Left ventricle myocardium superior (tissue), 1 donor: ENCODE measurements at regions of chr14 and their contacts with region 1.

Region 1: GRCh38 chr14:20613094-20614037 is 22.2 kb upstream of the RNASE12 start:
- DNase-seq: peak; percentile 80
- ATAC-seq: peak; percentile 82

Region 2: DNA sequence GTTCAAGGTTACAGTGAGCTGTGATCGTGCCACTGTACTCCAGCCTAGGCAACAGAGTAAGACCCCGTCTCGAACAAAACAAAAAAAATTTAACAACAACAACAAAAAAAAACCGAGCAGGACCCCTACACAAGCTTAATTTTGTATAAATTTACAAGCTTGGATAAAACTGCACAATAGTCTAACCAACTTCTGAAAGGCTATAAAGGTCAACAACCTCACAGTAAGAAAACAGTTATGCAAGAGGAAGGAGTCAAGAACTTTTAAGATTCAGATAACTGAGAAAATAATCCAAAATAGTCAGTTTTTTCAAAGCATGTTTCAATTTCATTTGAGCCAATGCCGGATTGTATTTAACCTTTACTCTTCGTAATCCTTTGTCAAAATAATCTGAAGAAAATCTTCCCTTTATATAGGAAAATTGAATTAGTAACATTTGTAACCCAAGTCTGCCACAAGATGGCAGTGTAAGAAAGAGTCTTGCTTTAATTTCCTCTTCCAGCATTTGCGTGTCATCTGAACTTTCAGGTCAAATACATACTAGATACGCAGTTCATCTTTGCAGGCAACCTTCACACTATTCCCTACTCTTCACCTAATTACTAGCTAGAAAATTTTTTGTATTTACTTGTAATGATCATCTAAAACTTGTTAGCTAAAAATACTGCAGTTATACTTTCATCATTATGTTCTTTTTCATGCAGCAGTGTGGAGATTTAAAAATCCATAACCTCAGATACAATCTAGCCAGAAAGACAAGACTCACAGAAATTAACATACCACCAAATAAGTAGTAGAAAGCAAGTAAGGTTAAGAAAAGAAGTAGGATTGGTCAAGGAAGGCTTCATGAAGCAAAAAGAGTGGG is 286.1 kb before region 1 on chr14:
- intact Hi-C with region 1: loop called (anchors 2 kb)
- DNase-seq: no peak
- ATAC-seq: peak; percentile 32

Region 3: GRCh38 chr14:20413045-20413799 is 200.1 kb before region 1 on chr14 and contains the start of gene TEP1:
- intact Hi-C with region 1: loop called (anchors 10 kb)
- DNase-seq: peak; percentile 93
- ATAC-seq: peak; percentile 98
- total RNA-seq, gene TEP1: 10.5 TPM

Region 4: DNA sequence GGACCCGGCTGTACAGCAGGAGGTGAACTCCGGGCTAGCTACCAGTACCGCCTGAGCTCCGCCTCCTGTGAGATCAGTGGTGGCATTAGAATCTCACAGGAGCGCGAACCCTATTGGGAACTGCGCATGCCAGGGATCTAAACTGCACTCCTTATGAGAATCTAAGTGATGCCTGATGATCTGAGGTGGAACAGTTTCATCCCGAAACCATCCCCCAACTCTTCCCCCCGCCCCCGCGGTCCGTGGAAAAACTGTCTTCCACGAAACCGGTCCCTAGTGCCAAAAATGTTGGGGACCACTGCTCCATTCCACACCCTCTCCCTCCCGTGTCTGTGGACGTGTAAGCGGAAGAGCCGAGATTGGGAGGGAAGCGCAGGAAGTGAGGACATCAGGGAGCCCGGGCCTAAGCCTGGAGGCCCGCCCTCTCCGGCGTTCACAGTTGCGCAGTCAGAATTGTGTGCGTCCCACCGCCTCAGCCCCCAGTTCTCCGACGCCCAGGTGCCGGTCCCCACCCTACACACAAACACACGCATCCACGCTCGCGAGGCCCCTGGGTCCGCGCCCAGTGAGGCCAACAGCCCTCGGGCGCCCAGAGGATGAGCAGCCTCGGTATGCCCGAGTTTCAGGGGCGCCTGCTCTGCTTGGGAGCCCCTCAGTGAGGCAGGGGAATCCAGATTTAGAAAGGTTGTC is 69.2 kb after region 1 on chr14:
- intact Hi-C with region 1: loop called (anchors 5 kb)
- DNase-seq: peak; percentile 94
- ATAC-seq: peak; percentile 89